ENCODE measurements at regions of chr1 and their contacts with region 1.

Region 1: DNA sequence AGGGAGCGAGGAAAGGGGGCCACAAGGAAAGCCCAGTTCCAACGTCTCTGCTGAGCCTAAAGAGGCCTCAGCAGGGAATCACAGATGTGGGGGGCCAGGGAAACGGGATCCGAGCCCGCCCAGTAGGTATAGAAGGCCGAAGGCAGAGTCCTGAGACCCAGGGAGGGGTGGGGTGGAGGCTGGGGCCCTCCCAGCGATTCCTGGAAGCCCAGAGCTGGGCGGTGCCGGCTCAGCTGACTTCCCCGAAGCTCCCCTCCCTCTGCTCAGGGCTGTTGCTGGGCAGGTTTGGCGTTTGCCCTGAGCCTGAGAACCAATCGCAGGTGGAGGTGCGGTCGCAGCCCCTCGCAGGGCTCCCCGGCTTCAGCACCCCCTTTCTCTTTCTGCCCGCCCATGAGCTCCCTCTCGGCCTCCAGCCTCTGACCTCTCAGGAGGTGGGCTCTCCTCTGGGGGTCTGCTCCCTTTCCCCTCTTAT is 12.8 kb downstream of the ADAMTSL4 start:
- DNase-seq: peak; percentile 97
- H3K4me3 Mint-ChIP-seq: peak overlapping the region; percentile 99
- H3K27ac Mint-ChIP-seq: peak overlapping the region; percentile 100
- H3K4me1 Mint-ChIP-seq: peaks cover 55% of the 10 kb centered on the region
- H3K27me3 Mint-ChIP-seq: no peaks in the 10 kb centered on the region

Region 2: DNA sequence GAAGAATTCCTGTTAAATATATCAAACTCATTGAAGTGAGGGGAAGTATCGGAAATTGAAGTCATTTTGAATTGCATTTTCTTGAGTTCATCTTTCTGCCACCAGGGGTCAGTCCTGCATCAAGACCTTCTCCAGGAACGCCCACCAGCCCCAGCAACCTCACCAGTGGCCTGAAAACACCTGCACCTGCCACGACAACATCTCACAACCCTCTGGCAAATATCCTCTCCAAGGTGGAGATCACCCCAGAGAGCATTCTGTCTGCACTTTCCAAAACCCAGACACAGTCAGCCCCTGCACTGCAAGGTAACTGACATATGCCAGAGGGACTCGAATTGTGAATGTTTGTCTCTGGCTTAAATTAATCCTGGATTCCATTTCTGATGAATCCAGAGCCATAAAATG is 97.6 kb before region 1 on chr1:
- CTCF ChIA-PET with region 1: interaction called, 3 read pairs
- intact Hi-C with region 1: loop called (anchors 1 kb)
- DNase-seq: peak; percentile 79
- H3K4me3 Mint-ChIP-seq: no peak overlapping the region
- H3K27ac Mint-ChIP-seq: peak overlapping the region; percentile 41
- H3K4me1 Mint-ChIP-seq: peaks cover 2% of the 10 kb centered on the region
- H3K27me3 Mint-ChIP-seq: no peaks in the 10 kb centered on the region

Region 3: DNA sequence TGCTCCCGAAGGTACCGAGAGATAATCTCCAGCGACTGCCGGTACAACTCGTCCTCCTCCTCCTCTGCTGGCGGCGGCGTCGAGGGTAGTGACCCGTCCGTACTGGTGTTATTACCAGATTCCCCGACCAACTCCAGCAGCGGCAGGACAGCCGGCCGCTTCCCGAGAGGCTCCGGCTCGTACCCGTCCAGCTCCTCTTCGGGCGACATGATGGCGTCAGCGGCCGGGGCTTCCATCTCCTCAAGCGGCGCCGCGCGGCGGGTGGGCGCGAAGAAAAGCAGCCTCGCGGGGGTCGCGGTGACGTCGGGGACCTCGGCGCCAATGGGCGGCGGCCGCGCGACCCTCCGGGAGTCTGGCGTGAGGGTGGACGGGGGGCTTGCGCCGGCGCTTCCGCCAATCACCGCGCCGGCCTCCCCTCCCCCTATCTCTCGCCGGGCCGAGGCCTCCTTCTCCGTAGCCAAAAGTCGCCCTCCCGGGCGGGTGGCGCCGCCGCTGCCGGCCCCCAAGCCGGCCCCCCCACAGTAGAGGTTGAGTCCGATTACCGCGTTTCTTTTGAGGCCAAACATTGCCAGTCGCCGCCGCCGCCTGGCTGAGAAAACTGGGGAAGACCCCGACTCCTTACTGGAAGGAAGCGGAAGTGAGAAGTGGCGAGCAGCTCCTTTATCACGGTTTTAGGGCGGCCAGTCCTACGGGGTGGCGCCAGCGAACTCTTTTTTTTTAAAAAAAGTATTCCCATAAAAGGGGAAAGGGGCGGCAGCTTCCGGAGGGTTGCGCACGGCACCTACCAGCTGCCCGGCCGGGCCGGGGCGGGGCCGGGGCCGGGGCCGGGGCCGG is 17.2 kb after region 1 on chr1 and contains the start of gene MCL1:
- CTCF ChIA-PET with region 1: interaction called, 156 read pairs
- intact Hi-C with region 1: loop called (anchors 1 kb)
- DNase-seq: peak; percentile 95
- H3K4me3 Mint-ChIP-seq: peak within 1 kb of the TSS; percentile 90
- H3K27ac Mint-ChIP-seq: peak within 1 kb of the TSS; percentile 99
- H3K4me1 Mint-ChIP-seq: peaks cover 19% of the 10 kb centered on the region
- H3K27me3 Mint-ChIP-seq: no peaks in the 10 kb centered on the region
- total RNA-seq, gene MCL1: 228 to 235 TPM

Region 4: GRCh38 chr1:150621497-150622302 is 59.7 kb after region 1 on chr1:
- CTCF ChIA-PET with region 1: interaction called, 167 read pairs
- intact Hi-C with region 1: loop called (anchors 1 kb)
- DNase-seq: peak; percentile 78
- H3K4me3 Mint-ChIP-seq: peak overlapping the region; percentile 9
- H3K27ac Mint-ChIP-seq: peak overlapping the region; percentile 72
- H3K4me1 Mint-ChIP-seq: peaks cover 74% of the 10 kb centered on the region
- H3K27me3 Mint-ChIP-seq: no peaks in the 10 kb centered on the region

Region 5: GRCh38 chr1:150813058-150813707 is 251.2 kb after region 1 on chr1:
- CTCF ChIA-PET with region 1: interaction called, 7 read pairs
- intact Hi-C with region 1: loop called (anchors 1 kb)
- DNase-seq: peak; percentile 44
- H3K4me3 Mint-ChIP-seq: no peak overlapping the region
- H3K27ac Mint-ChIP-seq: no peak overlapping the region
- H3K4me1 Mint-ChIP-seq: peaks cover 1% of the 10 kb centered on the region
- H3K27me3 Mint-ChIP-seq: no peaks in the 10 kb centered on the region

Region 6: DNA sequence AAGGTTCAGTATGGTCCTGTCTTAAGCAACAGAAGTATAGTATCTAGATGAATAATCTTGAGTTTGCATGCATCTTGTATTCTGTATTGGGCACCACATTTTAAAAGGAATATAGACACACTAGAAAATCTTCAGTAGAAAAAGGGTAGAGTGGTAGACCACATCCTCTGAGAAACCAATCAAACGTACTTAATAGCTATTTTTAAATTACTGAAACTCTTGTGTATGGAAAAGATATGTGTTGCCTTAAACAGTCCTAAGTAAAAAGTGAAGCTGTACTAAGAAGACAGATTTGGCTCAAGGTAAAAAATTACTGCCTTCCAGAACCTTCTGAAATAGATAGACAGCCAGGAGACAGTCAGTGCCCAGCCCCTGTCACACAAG is 328.0 kb after region 1 on chr1:
- CTCF ChIA-PET with region 1: no interaction called
- intact Hi-C with region 1: no loop called
- DNase-seq: no peak
- H3K4me3 Mint-ChIP-seq: no peak overlapping the region
- H3K27ac Mint-ChIP-seq: peak overlapping the region; percentile 12
- H3K4me1 Mint-ChIP-seq: peaks cover 25% of the 10 kb centered on the region
- H3K27me3 Mint-ChIP-seq: no peaks in the 10 kb centered on the region

Region 7: DNA sequence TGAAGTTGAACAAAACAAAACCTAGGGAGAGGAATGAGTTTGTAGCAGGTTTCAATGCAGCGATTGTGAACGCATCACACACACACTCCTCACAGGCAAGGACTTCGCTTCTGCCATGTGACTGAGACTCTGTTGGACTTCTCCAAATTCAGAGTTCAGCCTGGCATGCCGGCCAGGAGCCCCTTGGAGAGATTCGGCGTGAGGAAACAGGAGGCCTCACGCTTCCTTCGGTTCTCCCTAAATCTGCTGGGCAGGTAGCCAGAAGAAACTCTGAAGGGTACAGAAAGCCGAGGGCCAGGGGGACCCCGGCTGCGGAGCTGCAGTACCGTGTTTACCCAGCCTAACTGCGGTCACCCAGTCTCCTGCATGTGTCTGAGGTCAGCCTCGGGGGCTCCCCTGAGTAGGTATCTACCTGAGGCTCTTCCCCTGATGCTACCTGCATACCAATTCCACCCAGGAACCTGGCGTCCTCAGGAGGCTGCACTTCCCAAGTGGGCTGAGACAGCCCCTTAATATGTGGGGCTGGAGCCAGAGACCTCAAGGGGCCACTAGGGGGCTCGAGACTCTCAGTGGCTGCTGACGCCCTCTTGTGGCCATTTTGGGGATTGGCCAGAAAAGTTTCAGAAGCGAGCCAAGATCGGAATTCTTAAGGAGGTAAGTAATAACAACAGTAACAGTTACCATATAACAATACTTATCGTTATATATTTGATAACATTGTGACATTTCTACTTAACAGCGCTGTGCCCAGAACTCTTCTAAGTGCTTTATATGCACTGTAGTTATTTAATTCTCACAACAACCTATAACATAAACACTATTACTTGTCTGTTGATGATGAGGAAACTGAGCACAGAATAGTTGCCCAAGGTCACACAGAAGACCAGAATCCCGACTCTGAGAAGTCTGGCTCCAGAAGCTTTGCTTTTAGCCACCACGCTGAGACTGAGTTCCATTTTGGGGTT is 417.4 kb after region 1 on chr1:
- CTCF ChIA-PET with region 1: interaction called, 3 read pairs
- intact Hi-C with region 1: loop called (anchors 1 kb)
- DNase-seq: peak; percentile 94
- H3K4me3 Mint-ChIP-seq: peak overlapping the region; percentile 43
- H3K27ac Mint-ChIP-seq: peak overlapping the region; percentile 53
- H3K4me1 Mint-ChIP-seq: peaks cover 39% of the 10 kb centered on the region
- H3K27me3 Mint-ChIP-seq: no peaks in the 10 kb centered on the region

Region 8: DNA sequence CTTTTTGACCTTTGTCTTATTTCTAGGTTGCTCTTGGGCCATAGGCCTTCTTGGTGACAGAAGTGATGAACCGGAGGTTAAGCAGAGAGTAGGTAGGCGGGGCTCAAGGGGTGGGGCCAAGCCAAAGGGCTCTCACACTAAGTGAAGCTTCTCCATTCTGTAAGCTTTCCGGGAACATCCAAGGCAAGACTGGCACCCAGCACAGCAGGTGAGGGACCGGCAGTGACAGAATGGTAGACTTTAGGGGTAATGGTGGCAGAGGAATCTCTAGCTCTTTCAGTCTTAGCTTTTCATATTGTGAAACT is 594.5 kb after region 1 on chr1 and contains the start of gene TNFAIP8L2:
- CTCF ChIA-PET with region 1: no interaction called
- intact Hi-C with region 1: loop called (anchors 2 kb)
- DNase-seq: peak; percentile 93
- H3K4me3 Mint-ChIP-seq: peak within 1 kb of the TSS; percentile 97
- H3K27ac Mint-ChIP-seq: peak within 1 kb of the TSS; percentile 98
- H3K4me1 Mint-ChIP-seq: peaks cover 40% of the 10 kb centered on the region
- H3K27me3 Mint-ChIP-seq: no peaks in the 10 kb centered on the region
- total RNA-seq, gene TNFAIP8L2: 9.6 to 10.5 TPM

Measured in activated naive CD4-positive, alpha-beta T cell treated with anti-CD3 and anti-CD28 coated beads for 36 hours (primary cell).